ENCODE measurements at regions of chr2 and their contacts with region 1.

Region 1: GRCh38 chr2:40220177-40220925 is 231.5 kb downstream of the SLC8A1 start:
- DNase-seq: peak; percentile 39 to 63 (median 51)
- H3K4me3 ChIP-seq: no peak overlapping the region
- H3K4me3 Mint-ChIP-seq: no peak overlapping the region
- H3K27ac ChIP-seq: peak overlapping the region in 1 of 2 donors; percentile 20
- H3K27ac Mint-ChIP-seq: peak overlapping the region in 6 of 7 donors; percentile 25 to 81 (median 66)
- H3K4me1 ChIP-seq: peaks cover 11 to 23% of the 10 kb centered on the region in 2 donors
- H3K4me1 Mint-ChIP-seq: peaks cover 41% of the 10 kb centered on the region
- H3K27me3 ChIP-seq: no peaks in the 10 kb centered on the region
- H3K27me3 Mint-ChIP-seq: no peaks in the 10 kb centered on the region
- CTCF ChIP-seq: no peak

Region 2: GRCh38 chr2:40072442-40073232 is 147.7 kb before region 1 on chr2:
- intact Hi-C with region 1: loop called in 1 of 2 experiments (anchors 5 kb)
- DNase-seq: no peak
- H3K4me3 ChIP-seq: no peak overlapping the region
- H3K4me3 Mint-ChIP-seq: no peak overlapping the region
- H3K27ac ChIP-seq: no peak overlapping the region
- H3K27ac Mint-ChIP-seq: no peak overlapping the region
- H3K4me1 ChIP-seq: no peaks in the 10 kb centered on the region
- H3K4me1 Mint-ChIP-seq: no peaks in the 10 kb centered on the region
- H3K27me3 ChIP-seq: no peaks in the 10 kb centered on the region
- H3K27me3 Mint-ChIP-seq: peaks cover 0 to 3% (median 3%) of the 10 kb centered on the region in 3 donors
- CTCF ChIP-seq: no peak

Measured in CD14-positive monocyte (primary cell).